ENCODE measurements at regions of chr1 and their contacts with region 1.

Region 1: DNA sequence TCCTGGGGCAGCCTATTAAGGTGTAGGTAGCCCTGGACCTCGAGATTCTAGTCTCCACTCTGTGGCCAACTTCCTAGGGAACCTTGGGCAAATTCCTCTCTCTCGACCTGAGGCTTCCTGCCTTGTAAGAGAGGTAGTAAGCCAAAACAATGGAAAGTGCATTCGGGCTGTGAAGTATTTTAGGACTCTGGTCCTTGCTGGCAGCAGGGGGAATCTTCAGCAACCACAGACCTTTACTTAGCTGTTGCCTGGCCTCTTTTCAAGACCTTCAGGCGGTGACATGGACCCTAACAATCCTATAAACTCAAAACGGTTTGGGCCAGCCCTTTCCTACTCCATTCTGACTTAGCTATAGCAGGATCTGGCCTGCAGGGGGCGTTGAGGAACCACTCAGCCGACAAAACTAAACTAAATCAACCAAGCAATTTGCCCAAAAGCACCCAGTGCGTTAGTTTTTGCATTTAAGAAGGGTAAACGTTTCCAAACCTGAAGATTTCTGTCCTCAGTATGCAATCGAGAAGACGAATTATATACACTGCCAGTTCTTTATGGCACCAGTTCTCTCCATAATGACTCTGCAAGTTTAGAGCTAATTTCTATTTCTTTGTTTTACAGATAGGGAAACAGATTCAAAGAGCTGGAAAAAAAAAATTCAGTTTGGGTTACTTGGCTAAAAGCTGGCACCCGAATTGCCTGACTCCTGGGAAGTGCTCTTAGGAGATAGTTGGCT is 10.9 kb upstream of the SESN2 start:
- DNase-seq: peak; percentile 85
- H3K4me3 ChIP-seq: peak overlapping the region in 1 of 3 experiments; percentile 10
- H3K27ac ChIP-seq: peak overlapping the region; percentile 22
- H3K4me1 ChIP-seq: peaks cover 25% of the 10 kb centered on the region
- H3K27me3 ChIP-seq: no peaks in the 10 kb centered on the region
- CTCF ChIP-seq: peak; percentile 91 to 96
- POLR2A ChIP-seq: no peak

Region 2: GRCh38 chr1:28259307-28260167 is 11.1 kb after region 1 on chr1 and contains the start of gene SESN2:
- CTCF ChIA-PET with region 1: interaction called, 73 read pairs
- POLR2A ChIA-PET with region 1: interaction called, 13 read pairs
- dilution Hi-C with region 1: no loop called
- intact Hi-C with region 1: loop called (anchors 1 kb)
- DNase-seq: peak; percentile 98
- H3K4me3 ChIP-seq: peak within 1 kb of the TSS; percentile 77 to 98 (median 80)
- H3K27ac ChIP-seq: peak within 1 kb of the TSS; percentile 34
- H3K4me1 ChIP-seq: peaks cover 12% of the 10 kb centered on the region
- H3K27me3 ChIP-seq: peaks cover 0 to 3% of the 10 kb centered on the region in 2 experiments
- CTCF ChIP-seq: no peak
- POLR2A ChIP-seq: peak; percentile 98
- total RNA-seq, gene SESN2: 13.1 and 13.2 TPM in 2 replicates

Region 3: DNA sequence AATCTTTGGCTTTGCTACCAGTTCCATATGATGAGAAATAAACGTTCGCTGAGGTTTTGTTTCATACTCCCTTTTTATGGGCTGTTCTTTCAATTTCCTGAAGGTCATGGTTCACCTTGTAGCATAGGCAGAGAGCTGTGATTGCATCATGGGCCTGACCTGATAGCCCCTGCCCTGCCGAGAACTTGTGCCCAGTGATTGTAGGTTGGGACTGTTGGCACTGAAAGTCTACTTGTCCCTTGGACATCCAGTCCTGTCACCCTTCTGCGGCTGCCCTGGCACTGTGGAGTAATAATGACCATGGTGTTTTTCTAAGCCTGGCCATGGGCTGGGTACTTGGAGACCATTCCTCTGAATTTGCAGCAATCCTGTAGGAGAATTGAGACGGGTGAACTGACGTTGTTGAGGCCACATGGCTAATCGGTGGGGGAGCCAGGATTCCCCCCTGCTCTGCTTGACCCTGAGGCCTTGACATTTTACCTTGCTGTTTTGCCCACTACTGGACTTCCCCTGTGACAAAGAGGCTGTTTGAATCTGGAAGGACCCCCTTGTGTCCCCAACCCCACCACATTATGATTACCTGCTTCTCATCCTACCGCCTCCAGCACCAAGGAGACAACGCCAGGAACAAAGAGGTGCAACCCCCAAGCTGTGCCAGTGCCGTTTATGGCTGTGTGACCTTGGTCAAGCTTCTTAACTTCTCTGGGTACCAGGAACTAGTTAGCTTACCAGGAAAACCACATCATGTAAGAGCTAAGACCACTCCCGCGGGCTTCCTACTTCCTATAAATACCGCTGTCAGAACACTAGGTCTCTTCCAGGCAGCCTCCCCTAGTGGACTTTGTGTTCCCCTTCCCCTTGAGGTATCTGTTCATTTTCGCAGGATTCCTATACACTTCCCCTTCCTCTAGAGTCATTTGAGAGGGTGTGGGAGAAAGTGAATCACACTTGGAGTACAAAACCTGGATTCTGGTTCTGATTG is 34.3 kb after region 1 on chr1:
- CTCF ChIA-PET with region 1: interaction called, 16 read pairs
- POLR2A ChIA-PET with region 1: no interaction called
- dilution Hi-C with region 1: no loop called
- intact Hi-C with region 1: no loop called
- DNase-seq: no peak
- H3K4me3 ChIP-seq: no peak overlapping the region
- H3K27ac ChIP-seq: no peak overlapping the region
- H3K4me1 ChIP-seq: no peaks in the 10 kb centered on the region
- H3K27me3 ChIP-seq: no peaks in the 10 kb centered on the region
- CTCF ChIP-seq: no peak
- POLR2A ChIP-seq: no peak

Region 4: GRCh38 chr1:28354121-28354520 is 105.7 kb after region 1 on chr1:
- CTCF ChIA-PET with region 1: interaction called, 37 read pairs
- POLR2A ChIA-PET with region 1: no interaction called
- dilution Hi-C with region 1: no loop called
- intact Hi-C with region 1: loop called (anchors 2 kb)
- DNase-seq: no peak
- H3K4me3 ChIP-seq: no peak overlapping the region
- H3K27ac ChIP-seq: no peak overlapping the region
- H3K4me1 ChIP-seq: no peaks in the 10 kb centered on the region
- H3K27me3 ChIP-seq: no peaks in the 10 kb centered on the region
- CTCF ChIP-seq: no peak
- POLR2A ChIP-seq: no peak

Region 5: DNA sequence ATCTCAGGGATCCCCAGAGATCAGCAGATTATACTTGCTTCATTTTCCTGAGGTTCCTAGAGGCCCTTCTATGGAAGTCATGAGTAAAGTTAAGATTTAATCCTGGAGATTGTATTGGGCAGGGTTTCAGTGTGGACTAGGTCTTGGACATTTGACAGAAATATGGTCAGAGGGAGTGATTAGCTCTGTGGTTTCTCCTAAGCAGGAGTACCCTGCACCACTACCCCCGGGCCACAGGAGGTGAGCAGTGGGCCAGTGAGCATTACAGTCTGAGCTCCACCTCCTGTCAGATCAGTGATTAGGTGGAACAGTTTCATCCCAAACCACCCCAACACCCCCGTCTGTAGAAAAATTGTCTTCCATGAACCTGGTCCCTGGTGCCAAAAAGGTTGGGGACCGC is 164.3 kb after region 1 on chr1:
- CTCF ChIA-PET with region 1: interaction called, 11 read pairs
- POLR2A ChIA-PET with region 1: no interaction called
- dilution Hi-C with region 1: no loop called
- intact Hi-C with region 1: loop called (anchors 1 kb)
- DNase-seq: no peak
- H3K4me3 ChIP-seq: no peak overlapping the region
- H3K27ac ChIP-seq: no peak overlapping the region
- H3K4me1 ChIP-seq: peaks cover 18% of the 10 kb centered on the region
- H3K27me3 ChIP-seq: no peaks in the 10 kb centered on the region
- CTCF ChIP-seq: no peak
- POLR2A ChIP-seq: no peak

Region 6: DNA sequence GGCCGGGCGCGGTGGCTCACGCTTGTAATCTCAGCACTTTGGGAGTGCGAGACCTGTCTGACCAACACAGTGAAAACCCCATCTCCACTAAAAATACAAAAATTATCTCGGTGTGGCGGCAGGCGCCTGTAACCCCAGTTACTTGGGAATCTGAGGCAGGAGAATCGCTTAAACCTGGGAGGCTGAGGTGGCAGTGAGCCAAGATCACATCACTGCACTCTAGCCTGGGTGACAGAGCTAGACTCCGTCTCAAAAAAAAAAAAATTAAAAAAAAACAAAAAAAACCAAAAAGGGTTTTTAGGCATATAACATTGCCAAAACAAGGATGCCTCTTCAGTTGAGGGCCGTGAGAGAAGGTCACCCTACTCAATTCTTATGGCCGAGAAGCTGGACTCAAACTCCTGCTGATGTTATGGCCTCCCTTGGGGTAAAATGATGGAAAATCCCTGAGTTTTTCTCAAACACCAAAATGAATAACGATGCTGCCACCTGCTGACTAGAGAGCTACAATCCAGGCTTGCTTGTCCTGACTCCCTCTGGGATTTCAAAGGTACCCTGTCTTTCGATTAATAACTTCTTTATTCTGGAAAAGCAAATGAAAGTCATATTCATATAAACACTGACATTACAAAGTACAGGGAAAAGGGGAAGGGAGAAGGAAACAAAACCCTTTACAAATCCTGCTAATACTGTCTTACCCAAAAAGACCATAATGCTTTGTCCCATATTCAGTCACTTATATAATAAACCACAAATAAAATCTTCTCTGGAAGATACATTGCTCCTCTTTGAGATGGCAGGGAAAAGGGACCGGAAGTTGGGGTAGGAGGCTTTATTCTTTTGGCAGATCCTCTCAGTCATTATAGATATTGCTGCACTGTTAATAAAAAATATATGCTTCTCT is 354.3 kb after region 1 on chr1:
- CTCF ChIA-PET with region 1: interaction called, 83 read pairs
- POLR2A ChIA-PET with region 1: no interaction called
- dilution Hi-C with region 1: loop called (anchors 25 kb)
- intact Hi-C with region 1: loop called (anchors 1 kb)
- DNase-seq: peak; percentile 72
- H3K4me3 ChIP-seq: no peak overlapping the region
- H3K27ac ChIP-seq: no peak overlapping the region
- H3K4me1 ChIP-seq: peaks cover 8% of the 10 kb centered on the region
- H3K27me3 ChIP-seq: no peaks in the 10 kb centered on the region
- CTCF ChIP-seq: peak; percentile 63 to 64
- POLR2A ChIP-seq: no peak